ENCODE measurements at regions of chr2 and their contacts with region 1.

Region 1: GRCh38 chr2:8380026-8380425 is 301.8 kb upstream of the ID2 start:
- DNase-seq: peak in 4 of 5 donors; percentile 41 to 68 (median 56)
- ATAC-seq: peak; percentile 64 to 97 (median 82)
- H3K4me3 ChIP-seq: no peak overlapping the region
- H3K27ac ChIP-seq: peak overlapping the region in 11 of 12 donors; percentile 24 to 80 (median 62)
- H3K4me1 ChIP-seq: peaks cover 0 to 17% (median 6%) of the 10 kb centered on the region in 12 donors
- H3K27me3 ChIP-seq: no peaks in the 10 kb centered on the region
- CTCF ChIP-seq: no peak
- POLR2A ChIP-seq: no peak

Region 2: DNA sequence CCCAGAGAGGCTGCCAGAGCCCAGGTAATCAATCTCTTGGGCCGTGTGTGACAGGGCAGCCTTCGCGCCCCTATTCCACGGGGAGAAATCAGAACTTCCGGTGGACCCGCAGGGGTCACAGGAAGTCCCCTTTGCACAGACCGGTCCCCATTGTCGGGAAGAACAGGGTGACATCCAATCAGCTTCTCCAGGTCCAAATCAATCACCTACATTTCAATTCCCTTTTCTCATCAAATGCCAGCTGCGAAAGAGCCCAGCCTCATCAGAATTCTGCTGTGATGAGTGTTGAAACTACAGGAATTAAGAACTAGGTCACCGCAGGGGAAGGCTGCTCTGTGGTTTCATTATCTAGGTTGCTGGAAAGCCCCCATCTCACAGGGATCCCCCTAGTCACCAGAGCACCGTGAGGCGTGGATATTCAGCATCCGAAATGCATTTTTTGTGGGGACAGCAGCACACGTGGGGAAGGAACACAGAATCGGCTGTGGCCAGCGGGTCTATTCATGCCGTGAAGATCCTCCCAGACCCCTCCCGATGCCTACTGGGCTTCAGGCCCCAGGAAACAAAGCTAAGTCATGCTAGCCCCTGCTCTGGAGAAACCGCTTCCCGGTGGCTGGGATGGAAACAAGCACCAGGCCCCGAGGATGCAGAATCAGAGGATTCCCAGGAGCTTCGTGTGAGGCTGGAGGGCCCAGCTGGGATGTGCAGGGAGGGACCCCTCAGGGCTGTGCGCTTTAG is 108.1 kb after region 1 on chr2:
- intact Hi-C with region 1: loop called in 1 of 10 experiments (anchors 10 kb)
- DNase-seq: no peak
- ATAC-seq: peak in 2 of 4 donors; percentile 27 to 55
- H3K4me3 ChIP-seq: peak overlapping the region in 5 of 12 donors; percentile 8 to 41 (median 17)
- H3K27ac ChIP-seq: peak overlapping the region in 1 of 12 donors; percentile 78
- H3K4me1 ChIP-seq: peaks cover 0 to 53% (median 9%) of the 10 kb centered on the region in 12 donors
- H3K27me3 ChIP-seq: no peaks in the 10 kb centered on the region
- CTCF ChIP-seq: no peak
- POLR2A ChIP-seq: no peak

Region 3: DNA sequence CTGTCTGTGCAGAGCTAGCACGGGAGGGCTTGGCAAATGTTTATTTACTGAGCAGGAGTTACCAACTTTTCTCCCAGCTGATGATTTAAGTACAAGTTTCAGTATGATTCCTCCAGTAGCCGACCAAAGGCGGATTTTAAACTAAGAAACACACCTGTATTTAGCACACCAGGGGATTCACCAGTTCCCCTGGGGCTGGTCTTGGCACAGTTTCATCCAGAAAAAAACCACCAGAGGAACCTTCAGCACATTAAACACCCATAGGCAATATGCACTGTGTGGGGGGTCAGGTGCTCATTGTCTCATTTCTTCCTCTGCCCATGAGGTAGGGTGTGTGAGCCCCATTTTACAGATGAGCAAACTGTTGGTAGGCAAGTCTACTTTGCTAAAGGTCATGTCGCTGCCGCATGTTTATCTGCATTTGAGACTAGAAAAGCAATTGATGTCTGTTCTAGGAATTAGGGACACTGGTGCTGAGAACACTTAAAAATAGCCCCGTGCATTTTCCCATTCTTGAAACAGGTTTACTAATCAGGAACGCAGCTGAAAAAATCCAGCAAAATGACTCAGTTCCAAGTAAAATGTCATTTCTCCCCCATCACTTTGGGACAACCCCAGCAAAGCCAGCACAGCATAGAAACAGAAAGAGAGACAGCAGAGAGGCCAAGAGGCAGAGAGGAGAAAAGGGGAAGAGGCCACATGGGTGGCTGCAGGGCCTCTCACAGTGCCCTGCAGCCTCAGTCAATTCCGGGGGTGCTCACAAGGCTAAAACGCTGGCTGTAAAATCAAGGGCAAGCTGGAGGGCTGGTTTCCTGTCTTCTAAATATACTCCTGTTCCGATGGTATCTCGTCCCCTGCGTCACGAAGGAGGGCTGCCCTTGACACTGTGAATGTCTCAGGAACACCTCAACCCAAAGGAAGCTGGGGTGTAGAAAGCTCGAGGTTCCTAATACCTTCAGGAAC is 135.1 kb after region 1 on chr2:
- intact Hi-C with region 1: loop called in 1 of 10 experiments (anchors 10 kb)
- DNase-seq: peak in 4 of 5 donors; percentile 45 to 72 (median 61)
- ATAC-seq: peak; percentile 73 to 85 (median 78)
- H3K4me3 ChIP-seq: no peak overlapping the region
- H3K27ac ChIP-seq: peak overlapping the region in 11 of 12 donors; percentile 18 to 75 (median 52)
- H3K4me1 ChIP-seq: peaks cover 0 to 64% (median 13%) of the 10 kb centered on the region in 12 donors
- H3K27me3 ChIP-seq: no peaks in the 10 kb centered on the region
- CTCF ChIP-seq: no peak
- POLR2A ChIP-seq: no peak

Measured in heart left ventricle (tissue), 16 donors.